ENCODE measurements at regions of chr5 and their contacts with region 1.

Region 1: DNA sequence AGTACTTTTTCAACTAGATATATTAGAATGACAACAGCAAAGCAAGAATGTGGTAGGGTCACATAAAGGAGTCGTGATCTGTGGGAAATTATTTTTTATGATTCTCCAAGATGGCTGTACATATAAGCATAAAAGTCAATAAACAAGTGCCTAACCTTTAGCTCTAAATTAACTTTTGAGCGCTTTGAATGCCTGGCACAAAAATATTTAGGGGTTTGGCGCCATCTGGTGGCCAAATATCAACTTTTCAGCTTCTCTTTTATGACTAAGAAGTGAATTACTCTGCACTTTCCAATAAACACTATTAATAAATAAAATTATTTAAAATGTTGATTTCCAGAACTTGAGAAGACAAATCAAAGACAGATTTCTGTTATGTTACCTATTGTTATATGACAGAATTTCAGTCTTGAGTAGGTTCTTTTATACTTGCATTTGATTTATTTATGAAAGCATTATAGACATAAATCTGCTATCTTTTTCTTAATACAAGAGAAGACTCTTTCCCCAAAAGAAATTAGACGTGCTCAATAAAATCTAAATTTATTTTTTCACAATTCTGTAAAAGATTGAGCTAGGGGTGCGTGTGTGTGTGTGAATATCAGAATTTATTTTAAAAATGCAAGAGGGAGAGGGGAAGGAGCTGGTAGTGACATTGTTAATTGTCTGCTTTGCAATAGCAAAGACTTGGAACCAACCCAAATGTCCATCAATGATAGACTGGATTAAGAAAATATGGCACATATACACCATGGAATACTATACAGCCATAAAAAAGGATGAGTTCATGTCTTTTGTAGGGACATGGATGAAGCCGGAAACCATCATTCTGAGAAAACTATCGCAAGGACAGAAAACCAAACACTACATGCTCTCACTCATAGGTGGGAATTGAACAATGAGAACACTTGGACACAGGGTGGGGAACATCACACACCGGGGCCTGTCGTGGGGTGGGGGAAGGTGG is 36.7 kb upstream of the ARRDC3 start:
- DNase-seq: peak; percentile 32
- ATAC-seq: 0 out of 3 replicates have a peak, but pooled peaks have one; percentile 30
- H3K4me3 ChIP-seq: no peak overlapping the region
- H3K27ac ChIP-seq: no peak overlapping the region
- H3K4me1 ChIP-seq: no peaks in the 10 kb centered on the region
- H3K27me3 ChIP-seq: no peaks in the 10 kb centered on the region
- CTCF ChIP-seq: peak; percentile 61
- EP300 ChIP-seq: no peak
- POLR2A ChIP-seq: no peak
- RAD21 ChIP-seq: peak; percentile 37; the same call in 1 of the 2 replicates

Region 2: GRCh38 chr5:90709323-90710155 is 710.3 kb before region 1 on chr5:
- CTCF ChIA-PET with region 1: no interaction called
- POLR2A ChIA-PET with region 1: no interaction called
- in situ Hi-C with region 1: no loop called
- intact Hi-C with region 1: loop called (anchors 5 kb)
- DNase-seq: peak; percentile 27
- ATAC-seq: peak; percentile 89
- H3K4me3 ChIP-seq: no peak overlapping the region
- H3K27ac ChIP-seq: no peak overlapping the region
- H3K4me1 ChIP-seq: no peaks in the 10 kb centered on the region
- H3K27me3 ChIP-seq: no peaks in the 10 kb centered on the region
- CTCF ChIP-seq: peak; percentile 67
- EP300 ChIP-seq: no peak
- POLR2A ChIP-seq: no peak
- RAD21 ChIP-seq: no peak

Region 3: DNA sequence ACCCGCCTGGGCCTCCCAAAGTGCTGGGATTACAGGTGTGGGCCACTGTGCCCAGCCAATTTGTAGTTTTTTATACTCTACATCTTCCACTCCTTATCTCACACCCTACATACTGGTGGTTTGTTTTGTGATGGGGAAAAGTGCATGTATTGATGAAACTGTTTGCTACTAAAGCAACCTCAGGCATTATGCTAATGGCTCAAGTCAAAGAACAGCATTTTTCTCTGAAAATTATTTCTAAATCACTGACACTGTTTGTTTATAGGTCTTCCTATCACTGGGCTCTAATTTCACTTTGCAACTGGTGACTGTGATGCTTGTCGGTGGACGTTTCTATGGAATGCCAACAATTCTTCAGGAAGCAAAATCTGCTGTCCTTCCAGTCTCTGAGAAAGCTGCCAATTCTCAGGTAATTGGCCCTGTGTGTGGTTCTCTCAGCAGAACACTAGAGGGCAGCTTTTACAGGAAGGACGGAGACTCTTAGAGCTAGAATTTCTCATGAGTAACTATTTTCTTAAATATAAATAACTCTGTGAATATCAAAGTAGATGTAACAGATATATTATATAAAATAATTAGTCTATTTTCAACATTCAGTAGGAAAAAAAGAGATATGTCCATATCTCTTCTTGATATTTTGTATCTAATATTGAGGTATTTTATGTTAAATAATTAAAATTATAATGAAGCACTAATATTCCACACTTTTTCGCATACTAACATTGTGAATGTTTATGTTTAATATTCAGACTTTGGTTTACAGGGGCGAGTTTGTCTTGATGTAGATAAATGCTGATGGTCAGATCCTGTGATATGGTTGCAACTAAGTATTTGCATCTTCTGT is 617.2 kb before region 1 on chr5:
- CTCF ChIA-PET with region 1: interaction called, 11 read pairs
- POLR2A ChIA-PET with region 1: no interaction called
- in situ Hi-C with region 1: no loop called
- intact Hi-C with region 1: loop called (anchors 1 kb)
- DNase-seq: peak; percentile 25
- ATAC-seq: peak; percentile 83
- H3K4me3 ChIP-seq: no peak overlapping the region
- H3K27ac ChIP-seq: no peak overlapping the region
- H3K4me1 ChIP-seq: no peaks in the 10 kb centered on the region
- H3K27me3 ChIP-seq: peaks cover 0 to 5% of the 10 kb centered on the region in 2 experiments; a peak in 1 of 5 replicates
- CTCF ChIP-seq: peak; percentile 57
- EP300 ChIP-seq: no peak
- POLR2A ChIP-seq: no peak
- RAD21 ChIP-seq: no peak

Region 4: DNA sequence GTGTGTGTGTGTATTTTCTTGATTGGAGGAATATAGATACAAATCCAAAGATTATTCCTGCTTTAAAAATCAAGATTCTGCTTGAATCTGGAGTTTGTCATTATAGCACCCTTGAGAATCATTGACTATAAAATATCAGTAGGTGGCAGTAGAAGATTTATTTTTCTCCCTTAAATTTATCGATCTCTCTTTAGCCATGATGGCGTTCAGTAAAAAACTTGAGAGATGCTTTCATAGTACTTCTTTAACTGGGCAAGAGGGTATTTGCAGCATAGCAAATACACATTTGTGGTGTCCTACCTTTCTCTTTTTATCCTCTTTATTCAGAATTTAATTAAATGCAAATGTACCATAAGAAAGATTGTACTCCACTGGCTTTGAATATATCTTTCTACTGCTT is 553.5 kb before region 1 on chr5:
- CTCF ChIA-PET with region 1: interaction called, 11 read pairs
- POLR2A ChIA-PET with region 1: no interaction called
- in situ Hi-C with region 1: loop called (anchors 10 kb)
- intact Hi-C with region 1: loop called (anchors 1 kb)
- DNase-seq: peak; percentile 40
- ATAC-seq: peak; percentile 74
- H3K4me3 ChIP-seq: peak overlapping the region in 1 of 3 experiments; percentile 4; a peak in 1 of 6 replicates
- H3K27ac ChIP-seq: no peak overlapping the region
- H3K4me1 ChIP-seq: peaks cover 23% of the 10 kb centered on the region
- H3K27me3 ChIP-seq: no peaks in the 10 kb centered on the region
- CTCF ChIP-seq: peak; percentile 72
- EP300 ChIP-seq: peak in 1 of 2 experiments; percentile 28; a peak in 1 of 4 replicates
- POLR2A ChIP-seq: no peak
- RAD21 ChIP-seq: peak; percentile 80

Region 5: DNA sequence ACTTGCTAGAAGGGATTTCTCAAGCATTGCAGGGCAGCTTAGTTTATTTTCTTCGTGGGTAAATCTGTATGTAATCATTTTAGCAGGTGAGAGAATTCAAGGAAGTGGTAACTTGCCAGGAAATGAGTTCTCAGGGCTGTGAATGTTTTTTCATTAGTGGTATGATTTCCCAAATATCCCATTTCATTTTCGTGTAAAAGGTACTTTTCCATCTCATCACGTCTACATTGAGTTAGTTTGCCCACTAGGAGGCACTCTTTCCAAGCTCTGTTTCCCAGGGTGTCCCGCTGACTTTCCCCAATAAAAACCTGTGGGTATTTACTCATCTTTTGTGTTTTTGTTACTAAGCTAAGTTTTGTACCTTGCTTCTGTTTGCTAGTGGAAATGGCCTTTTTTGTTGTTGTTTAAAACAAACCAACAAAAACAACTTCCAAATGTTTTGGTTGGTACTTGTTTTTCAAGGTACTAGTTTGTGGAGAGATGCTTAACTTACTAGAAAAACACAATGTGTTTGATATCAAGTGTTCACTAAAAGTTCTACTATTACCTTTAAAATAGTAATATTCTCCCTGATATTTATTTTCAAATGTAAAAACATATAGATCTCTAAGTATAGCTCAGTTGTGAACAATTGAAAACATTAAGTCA is 487.7 kb before region 1 on chr5:
- CTCF ChIA-PET with region 1: no interaction called
- POLR2A ChIA-PET with region 1: no interaction called
- in situ Hi-C with region 1: no loop called
- intact Hi-C with region 1: loop called (anchors 1 kb)
- DNase-seq: peak; percentile 48
- ATAC-seq: peak; percentile 67
- H3K4me3 ChIP-seq: no peak overlapping the region
- H3K27ac ChIP-seq: no peak overlapping the region
- H3K4me1 ChIP-seq: peaks cover 45% of the 10 kb centered on the region
- H3K27me3 ChIP-seq: no peaks in the 10 kb centered on the region
- CTCF ChIP-seq: peak; percentile 80
- EP300 ChIP-seq: peak in 1 of 2 experiments; percentile 28; a peak in 1 of 4 replicates
- POLR2A ChIP-seq: no peak
- RAD21 ChIP-seq: peak; percentile 86

Region 6: DNA sequence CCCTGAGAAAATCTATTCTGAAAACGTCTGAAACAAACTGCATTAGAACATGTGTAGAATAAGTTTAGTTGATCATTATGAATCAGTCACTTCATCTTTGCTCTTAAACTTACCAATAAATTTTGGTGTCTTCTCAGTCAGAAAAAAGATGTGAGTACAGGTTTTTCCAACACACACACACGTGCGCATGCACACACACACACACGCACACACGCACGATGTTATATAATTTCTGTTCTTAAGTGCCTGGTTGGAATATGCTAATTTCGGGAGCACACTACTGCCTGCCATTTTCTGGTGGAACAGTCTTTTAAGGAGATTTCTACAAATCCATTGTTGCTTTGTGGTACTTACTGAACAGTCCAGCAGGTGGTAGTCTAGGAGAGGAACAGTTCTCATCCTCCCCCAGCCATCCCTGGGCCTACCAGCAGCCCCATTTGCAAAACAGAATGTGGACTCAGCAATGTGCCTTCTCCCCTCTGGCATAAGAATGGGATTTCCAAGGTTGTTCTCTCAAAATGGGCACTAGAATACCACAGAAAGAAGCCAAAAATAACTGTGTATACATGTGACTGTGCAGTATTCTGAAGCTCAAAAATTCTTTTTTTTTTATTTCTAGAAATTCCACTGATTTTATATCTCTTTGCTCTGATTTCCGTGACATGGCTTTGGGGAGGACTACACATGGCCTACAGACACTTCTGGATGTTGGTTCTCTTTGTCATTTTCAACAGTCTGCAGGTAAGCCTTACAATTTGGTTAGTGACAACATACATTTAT is 318.1 kb before region 1 on chr5:
- CTCF ChIA-PET with region 1: interaction called, 15 read pairs
- POLR2A ChIA-PET with region 1: no interaction called
- in situ Hi-C with region 1: loop called (anchors 10 kb)
- intact Hi-C with region 1: loop called (anchors 1 kb)
- DNase-seq: peak; percentile 64
- ATAC-seq: peak; percentile 99
- H3K4me3 ChIP-seq: no peak overlapping the region
- H3K27ac ChIP-seq: no peak overlapping the region
- H3K4me1 ChIP-seq: peaks cover 11% of the 10 kb centered on the region
- H3K27me3 ChIP-seq: no peaks in the 10 kb centered on the region
- CTCF ChIP-seq: peak; percentile 85
- EP300 ChIP-seq: no peak
- POLR2A ChIP-seq: no peak
- RAD21 ChIP-seq: peak; percentile 87

Region 7: DNA sequence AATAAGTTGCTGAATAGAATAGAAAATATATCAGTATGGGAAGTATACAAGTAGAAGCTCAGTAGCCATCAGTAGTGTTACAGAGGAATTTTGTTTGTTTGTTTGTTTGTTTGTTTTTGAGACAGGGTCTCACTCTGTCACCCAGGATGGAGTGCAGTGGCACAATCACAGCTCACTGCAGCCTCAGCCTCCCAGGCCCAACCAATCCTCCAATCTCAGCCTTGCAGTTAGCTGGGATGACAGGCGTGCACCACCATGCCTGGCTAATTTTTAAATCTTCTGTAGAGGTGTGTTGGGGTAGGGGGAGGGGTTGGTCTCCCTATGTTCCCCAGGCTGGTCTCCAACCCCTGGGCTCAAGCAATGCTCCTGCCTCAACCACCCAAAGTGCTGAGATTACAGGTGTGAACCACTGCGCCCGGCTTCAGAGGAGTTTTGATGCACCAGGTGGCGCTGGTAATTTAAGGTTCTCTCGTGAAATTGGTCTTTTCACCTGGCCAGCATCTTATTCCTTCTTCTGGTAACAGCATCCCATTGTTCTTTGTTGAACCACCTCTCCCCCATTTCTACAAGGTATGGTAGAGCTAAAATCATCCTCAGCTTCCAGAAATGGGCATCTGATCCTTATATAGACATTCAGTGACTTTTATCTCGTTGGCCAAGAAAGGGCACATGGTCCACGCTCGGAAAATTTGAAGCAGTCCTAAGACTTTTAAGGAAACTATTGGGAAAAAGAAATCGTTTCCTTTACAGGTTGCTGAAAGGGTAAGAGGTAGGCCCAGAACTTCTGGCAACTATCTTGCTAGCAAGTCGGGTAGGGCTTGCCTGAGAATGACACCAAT is 193.8 kb before region 1 on chr5:
- CTCF ChIA-PET with region 1: interaction called, 9 read pairs
- POLR2A ChIA-PET with region 1: no interaction called
- in situ Hi-C with region 1: no loop called
- intact Hi-C with region 1: loop called (anchors 1 kb)
- DNase-seq: peak; percentile 24
- ATAC-seq: peak; percentile 72
- H3K4me3 ChIP-seq: no peak overlapping the region
- H3K27ac ChIP-seq: no peak overlapping the region
- H3K4me1 ChIP-seq: no peaks in the 10 kb centered on the region; the same call in 1 of the 2 replicates
- H3K27me3 ChIP-seq: no peaks in the 10 kb centered on the region
- CTCF ChIP-seq: peak; percentile 77
- EP300 ChIP-seq: no peak
- POLR2A ChIP-seq: no peak
- RAD21 ChIP-seq: peak; percentile 79